ENCODE measurements at regions of chr17 and their contacts with region 1.

Region 1: DNA sequence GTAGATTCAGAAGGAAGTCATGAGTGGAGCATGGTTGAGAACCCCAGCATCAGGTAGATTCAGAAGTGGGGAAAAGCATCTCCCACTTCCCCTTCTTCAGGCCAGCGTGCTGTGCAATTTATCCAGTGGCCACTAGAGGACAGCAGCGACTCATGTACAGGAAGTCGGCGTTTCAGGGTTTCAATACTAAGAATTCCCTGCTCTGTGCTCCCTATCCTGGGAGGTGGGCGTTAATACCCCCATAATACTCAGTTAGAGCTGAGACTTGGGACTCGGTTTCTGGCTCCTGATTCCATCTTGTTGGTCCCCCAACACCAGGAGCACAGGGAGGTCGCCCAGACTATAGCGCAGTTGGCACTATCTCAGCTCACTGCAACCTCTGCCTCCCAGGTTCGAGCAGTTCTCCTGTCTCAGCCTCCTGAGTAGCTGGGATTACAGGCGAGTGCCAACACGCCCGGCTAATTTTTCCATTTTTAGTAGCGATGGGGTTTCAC is 75.3 kb upstream of the AMZ2 start:
- DNase-seq: no peak

Region 2: DNA sequence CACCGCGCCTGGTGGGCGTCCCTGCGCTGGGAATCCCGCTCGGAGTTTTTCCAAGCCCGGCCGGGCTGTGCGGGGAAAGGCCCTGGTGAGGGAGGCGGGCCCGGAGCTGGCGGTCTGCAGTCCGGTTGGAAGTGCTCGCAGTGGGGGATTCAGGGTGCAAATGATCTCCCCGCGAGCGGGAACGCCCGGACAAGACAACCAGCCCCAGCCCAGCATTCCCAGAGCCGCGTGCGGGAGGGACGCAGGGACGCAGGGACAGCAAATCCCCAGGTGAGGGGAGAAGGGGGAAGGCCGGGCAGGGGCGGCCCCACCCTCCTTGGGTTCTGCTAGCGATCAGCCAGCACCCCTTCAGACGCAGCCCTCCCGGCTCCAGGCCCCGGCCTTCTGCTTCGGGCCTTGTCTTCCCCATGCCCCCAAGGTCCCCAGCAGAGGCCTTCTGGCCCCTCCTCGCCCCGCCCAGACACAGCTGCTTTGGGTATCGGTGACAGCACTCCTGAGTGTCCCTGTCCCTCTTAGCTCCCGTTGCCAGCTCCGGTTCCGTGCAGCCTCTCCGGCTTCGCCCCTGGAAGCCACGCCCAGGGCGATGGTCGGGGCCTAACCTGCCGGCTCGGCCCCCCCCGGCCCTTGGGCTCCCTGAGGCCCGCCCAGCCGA is 24.6 kb after region 1 on chr17:
- intact Hi-C with region 1: no loop called
- DNase-seq: no peak

Region 3: DNA sequence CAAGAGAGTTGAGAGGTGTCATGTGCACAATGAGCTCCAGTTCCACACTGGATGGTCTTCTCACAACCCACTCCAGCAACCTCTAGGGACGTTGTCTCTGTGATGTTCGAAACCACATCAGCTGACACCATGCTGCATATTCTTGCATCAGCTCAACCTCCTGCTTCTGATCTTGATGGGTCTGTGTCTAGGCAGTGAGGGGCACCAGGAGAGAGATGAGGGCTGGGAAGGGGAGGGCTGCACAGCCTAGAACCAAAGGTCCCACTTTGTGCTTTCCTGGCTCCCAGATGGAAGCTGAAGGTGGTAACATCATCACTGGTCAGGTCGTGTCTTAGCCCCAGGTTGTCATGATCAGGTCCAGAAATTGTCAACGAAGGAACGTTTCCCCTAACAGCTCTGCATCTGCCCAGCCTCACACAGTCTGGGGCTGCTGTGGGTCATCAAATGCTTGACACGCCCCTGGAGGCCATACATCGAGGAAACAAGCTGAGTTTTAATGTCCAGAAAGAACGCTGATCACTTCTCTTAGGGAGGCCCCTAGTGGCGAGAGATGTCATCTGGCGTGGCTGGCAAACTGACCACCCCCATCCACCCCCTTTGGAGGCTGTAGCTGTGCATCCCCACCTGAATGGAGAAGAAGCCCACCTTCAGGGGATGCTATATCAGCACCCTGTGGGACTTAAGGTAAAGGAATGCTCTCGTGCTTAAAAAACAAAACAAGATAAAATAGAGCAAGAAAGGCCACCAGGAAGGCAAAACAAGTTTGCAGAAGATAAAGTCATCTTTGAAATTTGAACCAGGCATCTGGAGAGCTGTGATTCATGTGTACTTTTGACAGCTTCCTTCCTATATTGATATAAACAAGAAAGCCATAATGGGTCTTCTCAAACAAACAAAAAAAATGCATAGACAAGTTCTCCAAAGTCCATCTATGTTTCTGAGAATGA is 226.5 kb after region 1 on chr17:
- intact Hi-C with region 1: loop called (anchors 10 kb)
- DNase-seq: peak; percentile 81

Region 4: DNA sequence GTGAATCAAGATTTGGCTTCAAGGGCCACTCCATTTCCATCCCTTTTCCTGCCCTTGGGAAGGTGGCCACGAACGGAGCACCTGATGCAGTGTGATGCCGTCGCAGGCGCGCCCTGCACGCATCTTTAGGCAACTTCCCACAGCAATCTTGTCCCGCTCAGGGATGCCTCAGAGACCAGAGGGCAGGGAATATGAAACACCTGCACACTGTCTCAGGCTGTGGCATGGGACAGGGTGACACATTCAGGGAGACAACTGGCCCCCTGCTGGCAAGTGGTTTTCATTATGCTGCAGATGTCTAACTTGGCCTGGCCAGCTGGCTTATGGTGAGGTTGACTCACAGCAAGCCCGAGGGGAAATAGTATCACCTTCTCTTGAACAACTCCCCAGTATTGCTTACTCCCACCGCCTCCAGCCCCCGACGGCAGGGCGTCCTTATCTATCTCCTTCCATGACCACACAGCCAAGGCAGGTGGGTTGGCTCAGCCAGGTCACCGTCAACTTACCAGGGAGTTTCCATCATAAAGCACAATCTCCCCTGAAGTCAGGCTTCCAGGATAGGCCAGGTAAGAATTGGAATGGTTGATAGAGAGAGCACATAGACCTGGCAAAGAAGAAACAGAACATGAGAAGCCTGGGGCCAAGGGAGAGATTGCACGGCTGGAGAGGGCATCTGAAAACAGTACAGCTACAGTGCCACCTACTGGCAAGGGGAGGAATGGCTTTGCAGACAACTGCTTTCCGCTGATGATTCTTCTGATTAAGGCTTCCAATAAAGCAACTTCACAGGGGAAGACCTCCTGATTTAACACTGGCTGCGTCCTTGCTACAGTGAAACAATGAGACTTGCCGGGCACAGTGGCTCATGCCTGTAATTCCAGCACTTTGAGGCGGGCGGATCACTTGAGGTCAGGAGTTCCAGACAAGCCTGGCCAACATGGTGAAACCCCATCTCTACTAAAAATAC is 263.7 kb after region 1 on chr17:
- intact Hi-C with region 1: loop called (anchors 10 kb)
- DNase-seq: peak; percentile 83